Panc1 (cell line): ENCODE measurements at regions of chr2 and their contacts with region 1.

Region 1: DNA sequence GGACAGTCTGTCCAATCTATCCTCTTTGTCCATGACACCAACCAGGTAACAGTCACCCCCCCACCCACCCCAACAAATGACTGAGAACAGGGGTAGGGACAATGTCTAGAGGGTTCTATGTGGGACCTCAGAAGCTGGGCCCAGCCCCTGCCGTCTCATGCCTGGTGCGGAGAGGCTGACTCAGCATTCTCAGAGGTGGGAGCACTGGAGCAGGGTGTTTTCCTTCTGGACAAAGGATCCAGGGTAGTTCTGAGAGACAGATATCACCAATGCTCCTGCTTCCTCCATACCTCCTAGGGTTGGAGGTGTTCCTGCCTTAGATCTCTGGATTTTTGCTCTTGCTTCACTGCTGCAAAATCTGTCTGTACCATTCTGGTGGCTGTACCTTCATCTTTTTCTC is 33.9 kb upstream of the SP100 start:
- DNase-seq: no peak
- ATAC-seq: no peak
- H3K4me3 ChIP-seq: no peak overlapping the region
- H3K27ac ChIP-seq: no peak overlapping the region
- H3K4me1 ChIP-seq: no peaks in the 10 kb centered on the region
- H3K27me3 ChIP-seq: no peaks in the 10 kb centered on the region
- CTCF ChIP-seq: no peak

Region 2: DNA sequence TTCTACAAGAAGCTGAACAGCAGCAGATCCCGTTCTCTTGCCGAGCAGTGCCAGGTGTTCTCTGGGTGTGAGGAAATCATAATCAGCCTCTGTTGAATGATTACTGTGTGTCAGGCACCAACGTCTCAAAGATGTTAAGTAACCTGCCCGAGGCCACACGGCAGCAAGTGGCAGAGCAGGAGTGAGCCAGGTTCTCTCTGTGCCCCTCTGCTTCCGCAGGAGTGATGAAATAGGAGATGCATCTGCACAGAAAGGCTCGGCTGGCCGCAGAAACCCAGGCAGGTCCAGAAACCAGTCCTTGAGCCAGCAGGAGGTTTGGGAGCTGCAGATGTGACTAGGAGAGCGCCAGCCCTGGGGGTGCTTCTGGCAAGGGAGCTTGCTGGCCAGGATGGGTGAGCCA is 1472.6 kb after region 1 on chr2:
- CTCF ChIA-PET with region 1: no interaction called
- POLR2A ChIA-PET with region 1: interaction called, 12 read pairs
- in situ Hi-C with region 1: no loop called
- intact Hi-C with region 1: no loop called
- DNase-seq: no peak
- ATAC-seq: no peak
- H3K4me3 ChIP-seq: no peak overlapping the region
- H3K27ac ChIP-seq: no peak overlapping the region
- H3K4me1 ChIP-seq: no peaks in the 10 kb centered on the region
- H3K27me3 ChIP-seq: no peaks in the 10 kb centered on the region; the same call in 1 of the 2 replicates
- CTCF ChIP-seq: no peak